CD14-positive monocyte (primary cell): ENCODE measurements at regions of chr19 and their contacts with region 1.

Region 1: DNA sequence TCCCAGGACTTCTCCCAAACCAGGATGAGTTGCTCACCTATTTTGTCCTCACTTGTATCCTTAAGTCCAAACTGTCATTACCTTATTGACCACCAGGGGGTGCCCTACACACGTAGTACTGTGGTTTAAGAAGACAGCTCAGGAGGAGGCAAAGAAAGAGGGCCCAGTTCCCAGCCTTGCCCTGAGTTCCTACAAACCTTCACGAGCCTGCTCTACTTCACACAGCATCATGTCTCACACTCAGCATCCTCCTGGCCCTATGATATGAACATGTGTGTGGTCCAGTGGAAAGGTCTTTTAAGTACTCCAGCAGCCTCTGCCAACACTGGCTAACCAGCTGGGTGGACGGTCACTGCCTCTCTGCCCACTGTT is 8.1 kb upstream of the ZNF784 start:
- DNase-seq: peak; percentile 85 to 93 (median 92)
- H3K4me3 ChIP-seq: no peak overlapping the region
- H3K4me3 Mint-ChIP-seq: no peak overlapping the region
- H3K27ac ChIP-seq: no peak overlapping the region
- H3K27ac Mint-ChIP-seq: peak overlapping the region in 3 of 7 donors; percentile 57 to 81 (median 58)
- H3K4me1 ChIP-seq: peaks cover 28 to 41% of the 10 kb centered on the region in 2 donors
- H3K4me1 Mint-ChIP-seq: peaks cover 48% of the 10 kb centered on the region
- H3K27me3 ChIP-seq: no peaks in the 10 kb centered on the region
- H3K27me3 Mint-ChIP-seq: peaks cover 0 to 6% (median 3%) of the 10 kb centered on the region in 3 donors
- CTCF ChIP-seq: peak; percentile 68

Region 2: GRCh38 chr19:55516878-55517620 is 115.4 kb before region 1 on chr19:
- intact Hi-C with region 1: loop called (anchors 2 to 5 kb)
- DNase-seq: peak; percentile 92 to 94 (median 94)
- H3K4me3 ChIP-seq: peak overlapping the region; percentile 37 to 70 (median 39)
- H3K4me3 Mint-ChIP-seq: peak overlapping the region; percentile 72 to 85
- H3K27ac ChIP-seq: peak overlapping the region in 1 of 2 donors; percentile 61
- H3K27ac Mint-ChIP-seq: peak overlapping the region; percentile 68 to 94 (median 91)
- H3K4me1 ChIP-seq: peaks cover 4 to 11% of the 10 kb centered on the region in 2 donors
- H3K4me1 Mint-ChIP-seq: peaks cover 3% of the 10 kb centered on the region
- H3K27me3 ChIP-seq: no peaks in the 10 kb centered on the region
- H3K27me3 Mint-ChIP-seq: peaks cover 3 to 11% (median 6%) of the 10 kb centered on the region in 3 donors
- CTCF ChIP-seq: peak; percentile 67

Region 3: GRCh38 chr19:55580628-55581144 is 51.8 kb before region 1 on chr19 and contains the start of gene ZNF579:
- intact Hi-C with region 1: loop called in 1 of 2 experiments (anchors 5 kb)
- DNase-seq: peak; percentile 65 to 75 (median 75)
- H3K4me3 ChIP-seq: peak within 1 kb of the TSS; percentile 71 to 84 (median 79)
- H3K4me3 Mint-ChIP-seq: peak within 1 kb of the TSS; percentile 82 to 88
- H3K27ac ChIP-seq: peak within 1 kb of the TSS in 1 of 2 donors; percentile 66
- H3K27ac Mint-ChIP-seq: peak within 1 kb of the TSS; percentile 21 to 71 (median 61)
- H3K4me1 ChIP-seq: peaks cover 17 to 25% of the 10 kb centered on the region in 2 donors
- H3K4me1 Mint-ChIP-seq: peaks cover 24% of the 10 kb centered on the region
- H3K27me3 ChIP-seq: peaks cover 3 to 14% of the 10 kb centered on the region in 2 donors
- H3K27me3 Mint-ChIP-seq: peaks cover 13 to 16% (median 16%) of the 10 kb centered on the region in 3 donors
- CTCF ChIP-seq: no peak
- polyA plus RNA-seq, gene ZNF579: 0.05 to 1.8 TPM in 2 of 3 donors, not detected in the other

Region 4: DNA sequence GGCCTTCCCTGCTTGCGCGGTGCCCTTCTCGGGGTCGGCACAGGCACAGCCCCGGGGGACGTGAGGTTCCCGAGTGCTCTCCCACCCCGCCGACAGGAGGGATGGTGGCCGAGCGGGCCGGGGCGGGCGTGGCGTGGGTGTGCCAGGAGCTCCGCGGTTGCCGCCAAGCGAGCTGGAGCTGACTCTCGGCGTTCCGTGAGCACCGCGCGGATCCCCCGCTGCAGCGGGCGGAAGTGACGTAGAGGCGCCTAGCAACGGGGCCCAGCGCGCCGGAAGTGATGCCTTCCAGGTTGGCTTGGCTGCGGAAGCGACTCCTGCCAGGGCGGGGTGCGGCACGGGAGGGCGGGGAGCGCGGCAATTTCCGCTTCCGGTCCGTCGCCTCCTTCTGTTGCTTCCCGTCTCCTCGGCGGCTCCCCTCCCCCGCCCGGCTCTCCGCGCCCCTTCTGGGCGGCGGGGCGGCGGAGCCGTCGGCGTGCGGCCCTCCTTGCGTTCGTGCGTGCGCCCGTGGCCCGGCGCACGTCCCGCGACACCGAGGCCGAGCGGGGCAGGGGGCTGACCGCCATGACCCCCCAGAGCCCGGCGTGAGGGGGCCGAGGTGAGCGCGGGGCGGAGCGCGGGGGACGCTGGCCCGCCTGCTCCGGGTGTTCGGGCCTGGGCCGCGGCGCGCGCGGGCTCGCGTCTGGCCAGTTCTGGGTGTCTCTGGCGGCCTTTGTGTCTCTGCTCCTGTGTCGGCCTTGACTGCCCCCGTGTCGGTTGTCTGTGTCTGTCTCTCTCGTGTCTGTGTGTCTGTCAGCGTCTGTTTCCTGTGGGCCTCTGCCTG is 42.6 kb after region 1 on chr19 and contains the start of gene EPN1:
- intact Hi-C with region 1: loop called in 1 of 2 experiments (anchors 2 kb)
- DNase-seq: peak; percentile 96 to 98 (median 96)
- H3K4me3 ChIP-seq: peak within 1 kb of the TSS; percentile 81 to 93 (median 83)
- H3K4me3 Mint-ChIP-seq: peak within 1 kb of the TSS; percentile 93 to 99
- H3K27ac ChIP-seq: peak within 1 kb of the TSS; percentile 71 to 87
- H3K27ac Mint-ChIP-seq: peak within 1 kb of the TSS; percentile 95 to 98 (median 96)
- H3K4me1 ChIP-seq: peaks cover 51% of the 10 kb centered on the region in 2 donors
- H3K4me1 Mint-ChIP-seq: peaks cover 57% of the 10 kb centered on the region
- H3K27me3 ChIP-seq: no peaks in the 10 kb centered on the region
- H3K27me3 Mint-ChIP-seq: no peaks in the 10 kb centered on the region
- CTCF ChIP-seq: no peak
- polyA plus RNA-seq, gene EPN1: 18.7 to 75.2 (median 19.2) TPM

Region 5: GRCh38 chr19:55809381-55810058 is 177.1 kb after region 1 on chr19:
- intact Hi-C with region 1: loop called in 1 of 2 experiments (anchors 10 kb)
- DNase-seq: peak; percentile 17 to 73 (median 36)
- H3K4me3 ChIP-seq: no peak overlapping the region
- H3K4me3 Mint-ChIP-seq: no peak overlapping the region
- H3K27ac ChIP-seq: no peak overlapping the region
- H3K27ac Mint-ChIP-seq: no peak overlapping the region
- H3K4me1 ChIP-seq: no peaks in the 10 kb centered on the region
- H3K4me1 Mint-ChIP-seq: no peaks in the 10 kb centered on the region
- H3K27me3 ChIP-seq: no peaks in the 10 kb centered on the region
- H3K27me3 Mint-ChIP-seq: peaks cover 0 to 2% (median 0%) of the 10 kb centered on the region in 3 donors
- CTCF ChIP-seq: peak; percentile 41